Mammary epithelial cell (primary cell): ENCODE measurements at regions of chr6 and their contacts with region 1.

Region 1: GRCh38 chr6:25831532-25832306 is at the start of gene SLC17A1:
- DNase-seq: no peak
- H3K4me3 ChIP-seq: no peak within 1 kb of the TSS
- H3K27ac ChIP-seq: no peak within 1 kb of the TSS
- H3K4me1 ChIP-seq: no peaks in the 10 kb centered on the region
- H3K27me3 ChIP-seq: no peaks in the 10 kb centered on the region
- CTCF ChIP-seq: no peak
- total RNA-seq, gene SLC17A1: not detected

Region 2: GRCh38 chr6:25781134-25781533 is 50.6 kb before region 1 on chr6:
- CTCF ChIA-PET with region 1: no interaction called
- dilution Hi-C with region 1: loop called (anchors 5 kb)
- in situ Hi-C with region 1: no loop called
- intact Hi-C with region 1: no loop called
- DNase-seq: no peak
- H3K4me3 ChIP-seq: no peak overlapping the region
- H3K27ac ChIP-seq: no peak overlapping the region
- H3K4me1 ChIP-seq: no peaks in the 10 kb centered on the region
- H3K27me3 ChIP-seq: no peaks in the 10 kb centered on the region
- CTCF ChIP-seq: no peak

Region 3: DNA sequence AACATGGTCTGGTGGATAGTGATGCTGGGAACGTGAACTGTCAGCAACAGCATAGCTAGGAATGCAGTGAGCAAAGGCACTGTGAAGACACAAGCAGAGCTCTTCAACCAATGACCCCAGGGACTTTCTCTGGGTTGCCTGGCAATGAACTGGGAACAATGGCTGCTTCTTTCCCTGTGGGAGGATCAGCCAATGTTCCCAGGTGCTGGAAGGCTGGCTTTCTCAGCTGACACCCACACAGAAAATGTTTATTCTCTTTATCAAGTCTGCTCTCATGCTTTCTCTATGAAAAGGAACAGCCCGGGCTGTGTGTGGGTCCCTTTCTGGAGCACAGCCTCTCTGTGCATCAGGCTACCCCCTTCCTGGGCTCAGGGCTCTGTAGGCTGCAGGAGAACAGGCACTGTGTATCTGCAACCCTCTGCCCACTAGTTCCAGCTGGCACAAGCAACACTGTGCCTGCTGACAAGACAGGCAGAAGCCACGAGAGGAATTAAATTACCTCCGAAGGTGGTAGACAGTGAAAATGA is 309.7 kb after region 1 on chr6:
- CTCF ChIA-PET with region 1: no interaction called
- dilution Hi-C with region 1: no loop called
- in situ Hi-C with region 1: no loop called
- intact Hi-C with region 1: no loop called
- DNase-seq: no peak
- H3K4me3 ChIP-seq: no peak overlapping the region
- H3K27ac ChIP-seq: no peak overlapping the region
- H3K4me1 ChIP-seq: no peaks in the 10 kb centered on the region
- H3K27me3 ChIP-seq: no peaks in the 10 kb centered on the region
- CTCF ChIP-seq: no peak